ENCODE measurements at regions of chr11 and their contacts with region 1.

Region 1: GRCh38 chr11:60913793-60914632 is at the start of gene TMEM109:
- DNase-seq: peak; percentile 77 to 93 (median 91)
- ATAC-seq: peak; percentile 76
- H3K4me3 ChIP-seq: peak within 1 kb of the TSS; percentile 94
- H3K4me3 Mint-ChIP-seq: peak within 1 kb of the TSS; percentile 91 to 99 (median 98)
- H3K27ac ChIP-seq: peak within 1 kb of the TSS; percentile 94
- H3K27ac Mint-ChIP-seq: peak within 1 kb of the TSS; percentile 91 to 99 (median 97)
- H3K4me1 ChIP-seq: peaks cover 43 to 45% of the 10 kb centered on the region in 2 donors
- H3K4me1 Mint-ChIP-seq: peaks cover 39 to 77% (median 60%) of the 10 kb centered on the region in 7 donors
- H3K27me3 ChIP-seq: no peaks in the 10 kb centered on the region
- H3K27me3 Mint-ChIP-seq: peaks cover 0 to 11% (median 0%) of the 10 kb centered on the region in 5 donors
- total RNA-seq, gene TMEM109: 49.8 to 99.8 (median 56.9) TPM

Region 2: DNA sequence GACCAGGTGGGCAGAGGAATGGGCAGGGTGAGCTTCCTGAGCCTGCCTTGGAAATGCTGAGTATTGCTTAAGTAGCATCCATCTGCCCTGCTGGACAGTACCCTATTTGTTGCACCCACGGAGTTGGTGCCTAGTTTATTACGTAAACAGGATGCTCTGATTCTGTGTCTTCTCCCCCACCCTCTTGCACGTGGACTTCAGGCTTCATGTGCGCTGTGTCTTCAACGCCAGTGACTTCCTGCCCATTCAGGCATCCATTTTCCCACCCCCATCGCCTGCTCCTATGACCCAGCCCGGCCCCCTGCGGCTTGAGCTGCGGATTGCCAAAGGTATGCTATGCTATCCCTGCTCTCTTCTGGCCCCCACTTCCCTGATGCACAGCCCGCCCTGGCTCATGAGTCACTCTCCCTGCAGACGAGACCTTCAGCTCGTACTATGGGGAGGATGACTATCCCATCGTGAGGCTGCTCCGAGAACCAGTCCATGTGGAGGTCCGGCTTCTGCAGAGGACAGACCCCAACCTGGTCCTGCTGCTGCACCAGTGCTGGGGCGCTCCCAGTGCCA is 41.0 kb before region 1 on chr11:
- CTCF ChIA-PET with region 1: no interaction called
- POLR2A ChIA-PET with region 1: no interaction called
- intact Hi-C with region 1: no loop called
- DNase-seq: peak in 4 of 9 donors; percentile 11 to 42 (median 26)
- ATAC-seq: peak; percentile 56
- H3K4me3 ChIP-seq: no peak overlapping the region
- H3K4me3 Mint-ChIP-seq: no peak overlapping the region
- H3K27ac ChIP-seq: no peak overlapping the region
- H3K27ac Mint-ChIP-seq: peak overlapping the region in 3 of 9 donors; percentile 13 to 59 (median 33)
- H3K4me1 ChIP-seq: peaks cover 0 to 25% of the 10 kb centered on the region in 2 donors
- H3K4me1 Mint-ChIP-seq: peaks cover 0 to 20% (median 5%) of the 10 kb centered on the region in 7 donors
- H3K27me3 ChIP-seq: no peaks in the 10 kb centered on the region
- H3K27me3 Mint-ChIP-seq: peaks cover 0 to 3% (median 0%) of the 10 kb centered on the region in 5 donors

Region 3: DNA sequence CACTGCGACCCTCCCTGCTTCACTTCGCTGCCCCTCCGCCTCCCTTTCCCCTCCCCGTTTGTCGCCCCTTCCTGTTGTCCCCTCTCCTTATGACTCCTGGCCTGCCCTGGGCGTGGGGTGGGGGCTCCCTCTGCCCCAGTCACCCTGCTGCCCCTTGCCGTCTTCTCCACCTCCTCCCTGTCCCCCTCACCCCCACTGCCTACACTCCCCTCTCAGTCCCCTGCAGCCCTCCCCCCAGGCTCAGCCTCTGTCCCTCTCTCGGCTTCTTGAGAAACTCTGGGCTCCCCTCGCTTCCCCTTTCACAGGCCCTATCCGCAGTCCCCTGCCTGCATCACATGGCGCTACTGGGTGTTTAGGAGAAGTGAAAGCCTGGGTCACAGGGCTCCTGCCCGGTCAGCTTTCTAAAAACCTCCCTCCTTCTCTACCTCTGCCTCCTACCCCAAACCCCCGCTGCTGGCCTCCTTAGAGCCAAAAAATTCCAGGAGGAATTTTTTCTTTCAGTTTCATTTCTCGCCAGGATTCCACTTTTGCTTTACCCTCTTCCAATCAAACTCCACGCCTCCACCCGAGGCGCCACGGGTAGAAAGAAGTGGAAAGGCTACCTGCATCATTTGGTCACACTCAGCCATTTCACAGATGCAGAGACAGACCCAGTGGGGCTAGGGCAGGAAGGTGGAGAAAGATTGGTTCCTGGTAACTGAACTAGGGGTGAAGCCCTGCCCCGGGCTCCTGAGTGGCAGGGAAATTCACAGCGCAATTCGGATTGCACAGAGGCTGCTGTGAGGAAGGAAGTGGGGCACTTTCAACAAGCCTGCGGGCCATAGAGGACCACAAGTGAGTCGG is 38.1 kb after region 1 on chr11 and contains the start of gene SLC15A3:
- CTCF ChIA-PET with region 1: interaction called, 3 read pairs
- POLR2A ChIA-PET with region 1: interaction called, 9 read pairs
- intact Hi-C with region 1: loop called in 1 of 2 experiments (anchors 1 kb)
- DNase-seq: peak in 7 of 9 donors; percentile 55 to 66 (median 64)
- ATAC-seq: peak; percentile 73
- H3K4me3 ChIP-seq: peak within 1 kb of the TSS; percentile 58
- H3K4me3 Mint-ChIP-seq: peak within 1 kb of the TSS; percentile 83 to 96 (median 90)
- H3K27ac ChIP-seq: peak within 1 kb of the TSS; percentile 67
- H3K27ac Mint-ChIP-seq: peak within 1 kb of the TSS; percentile 81 to 97 (median 96)
- H3K4me1 ChIP-seq: peaks cover 0 to 21% of the 10 kb centered on the region in 2 donors
- H3K4me1 Mint-ChIP-seq: peaks cover 16 to 44% (median 40%) of the 10 kb centered on the region in 7 donors
- H3K27me3 ChIP-seq: no peaks in the 10 kb centered on the region
- H3K27me3 Mint-ChIP-seq: peaks cover 0 to 44% (median 0%) of the 10 kb centered on the region in 5 donors
- total RNA-seq, gene SLC15A3: 2.9 to 101 (median 10.8) TPM

Region 4: GRCh38 chr11:61161190-61162091 is 247.4 kb after region 1 on chr11 and contains the start of gene VPS37C:
- CTCF ChIA-PET with region 1: no interaction called
- POLR2A ChIA-PET with region 1: interaction called, 3 read pairs
- intact Hi-C with region 1: loop called (anchors 1 to 2 kb)
- DNase-seq: peak; percentile 80 to 99 (median 87)
- ATAC-seq: peak; percentile 83
- H3K4me3 ChIP-seq: peak within 1 kb of the TSS; percentile 74
- H3K4me3 Mint-ChIP-seq: peak within 1 kb of the TSS; percentile 85 to 96 (median 90)
- H3K27ac ChIP-seq: peak within 1 kb of the TSS; percentile 78
- H3K27ac Mint-ChIP-seq: peak within 1 kb of the TSS; percentile 84 to 96 (median 94)
- H3K4me1 ChIP-seq: peaks cover 7 to 14% of the 10 kb centered on the region in 2 donors
- H3K4me1 Mint-ChIP-seq: peaks cover 31 to 62% (median 48%) of the 10 kb centered on the region in 7 donors
- H3K27me3 ChIP-seq: no peaks in the 10 kb centered on the region
- H3K27me3 Mint-ChIP-seq: no peaks in the 10 kb centered on the region
- total RNA-seq, gene VPS37C: 4.1 to 12.0 (median 7.9) TPM

Measured in naive thymus-derived CD4-positive, alpha-beta T cell (primary cell).